Sciatic nerve (tissue), 2 donors: ENCODE measurements at regions of chr19 and their contacts with region 1.

Region 1: DNA sequence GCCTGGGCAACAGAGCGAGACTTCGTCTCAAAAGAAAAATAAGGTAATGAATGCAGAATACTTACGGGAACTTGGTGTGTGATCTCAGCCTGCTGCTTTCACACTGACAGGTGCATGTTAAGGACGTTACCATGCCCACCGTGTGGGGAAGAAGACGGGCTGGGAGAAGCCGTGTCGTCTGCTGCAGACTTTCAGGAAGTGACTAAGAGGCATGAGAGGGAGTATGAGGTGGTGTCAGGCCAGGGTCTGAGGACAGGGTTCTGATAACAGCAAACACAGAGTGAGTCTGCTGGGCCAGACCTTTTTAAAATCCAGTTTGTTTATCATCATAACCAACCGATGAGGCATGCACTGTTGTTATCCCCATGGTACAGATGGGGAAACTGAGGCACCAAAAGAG is 13.6 kb upstream of the GALP start:
- DNase-seq: no peak
- ATAC-seq: no peak

Region 2: DNA sequence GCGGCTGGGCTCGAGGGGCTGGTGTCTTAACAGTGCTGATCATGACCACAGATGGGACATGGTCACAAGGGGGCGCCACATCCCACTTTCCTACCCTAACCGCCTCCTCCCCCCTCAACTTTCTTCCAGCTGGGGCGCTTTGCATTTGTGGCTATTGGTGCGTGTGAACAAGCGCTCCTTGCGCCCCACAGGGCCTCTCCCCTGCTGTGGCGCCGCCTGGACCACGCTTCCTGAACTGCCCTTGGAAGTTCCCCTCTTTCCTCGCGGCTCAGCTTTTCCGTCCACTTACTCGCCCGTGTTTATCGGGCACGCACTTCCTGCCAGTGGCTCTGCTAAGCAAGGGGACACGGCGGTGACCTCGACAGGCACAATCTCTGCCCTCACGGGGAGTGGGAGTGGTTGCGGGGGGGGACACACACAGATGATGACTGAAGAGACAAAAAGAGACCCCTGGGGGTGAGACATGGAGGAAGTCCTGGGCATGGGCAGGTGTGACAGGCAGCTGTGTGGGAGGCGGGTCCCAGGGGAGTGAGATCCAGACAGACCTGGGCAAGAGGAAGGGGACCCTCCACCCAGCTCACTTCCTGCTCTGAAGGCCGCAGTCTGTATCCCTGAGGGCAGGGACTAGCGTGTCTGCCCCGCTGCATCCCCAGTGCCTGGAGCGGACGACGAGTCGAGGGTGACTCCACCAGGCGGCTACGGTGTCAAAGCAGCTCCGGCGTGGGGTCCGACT is 81.4 kb before region 1 on chr19:
- intact Hi-C with region 1: loop called (anchors 5 kb)
- DNase-seq: peak; percentile 86
- ATAC-seq: peak; percentile 77

Region 3: DNA sequence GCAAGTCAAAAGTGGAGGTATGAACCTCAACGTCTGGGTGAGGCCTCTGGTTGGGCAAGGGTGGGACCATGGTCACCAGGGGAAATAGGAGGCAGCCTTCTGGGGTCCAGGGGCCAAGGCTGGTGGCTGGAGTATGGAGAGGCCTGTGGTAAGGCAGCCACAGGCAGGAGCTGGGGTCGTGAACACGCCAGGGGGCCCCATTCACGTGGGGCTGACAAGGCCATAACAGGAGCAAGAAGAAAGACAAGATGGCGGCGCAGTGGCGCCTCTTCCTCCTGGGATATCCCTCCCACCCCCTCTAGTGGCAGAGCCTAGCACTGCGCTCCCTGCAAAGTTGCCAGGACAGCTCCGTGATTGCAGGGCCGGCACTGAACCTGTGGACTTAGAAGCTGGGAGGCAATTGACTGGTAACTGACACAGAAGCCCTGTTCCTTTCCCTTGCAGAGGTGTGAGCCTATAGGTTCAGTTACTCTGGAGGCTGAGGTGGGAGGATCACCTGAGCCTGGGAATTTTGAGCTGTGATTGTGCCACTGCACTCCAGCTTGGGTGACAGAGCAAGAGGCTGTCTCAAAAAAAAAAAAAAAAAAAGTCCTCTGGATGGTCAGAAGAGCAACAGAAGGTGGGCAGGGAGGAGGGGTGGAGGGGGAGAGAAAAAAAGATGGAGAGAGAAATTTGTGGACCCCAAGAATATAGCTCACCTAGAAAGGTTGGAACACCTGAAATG is 90.6 kb after region 1 on chr19:
- intact Hi-C with region 1: no loop called
- DNase-seq: peak; percentile 75
- ATAC-seq: peak; percentile 49